Prostate gland (tissue), 2 donors: ENCODE measurements at regions of chr10 and their contacts with region 1.

Region 1: DNA sequence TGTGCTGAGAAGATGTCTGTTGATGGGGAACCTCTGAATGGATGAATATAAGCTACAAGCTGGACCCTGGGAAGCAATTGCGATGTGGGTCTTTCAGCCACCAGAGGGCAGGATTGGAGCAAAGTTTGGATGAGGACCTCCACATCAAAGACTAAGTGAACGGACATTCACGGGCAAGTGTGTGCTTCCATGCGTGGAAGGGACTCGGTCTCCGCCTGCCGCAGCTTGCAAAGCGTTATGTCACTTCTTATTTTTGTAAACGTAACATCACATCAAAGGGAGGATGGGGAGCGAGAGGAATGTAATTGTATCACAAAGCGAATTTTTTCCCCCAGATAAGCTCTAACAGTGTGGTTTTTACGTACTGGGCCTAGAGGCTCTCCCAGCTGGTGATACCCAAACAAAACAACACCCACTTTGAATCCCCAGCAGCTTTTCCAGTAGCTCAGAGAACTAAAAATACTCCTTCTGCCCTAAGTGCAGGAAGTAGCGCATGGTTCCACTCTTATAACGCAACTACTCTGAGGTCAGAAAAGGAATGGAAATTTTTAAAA is 65.0 kb downstream of the VWA2 start:
- DNase-seq: peak; percentile 88
- H3K4me3 ChIP-seq: peak overlapping the region; percentile 11 to 17
- H3K27ac ChIP-seq: peak overlapping the region; percentile 13 to 37
- H3K4me1 ChIP-seq: no peaks in the 10 kb centered on the region
- H3K27me3 ChIP-seq: no peaks in the 10 kb centered on the region
- CTCF ChIP-seq: peak; percentile 31 to 90 (median 88)
- POLR2A ChIP-seq: no peak

Region 2: GRCh38 chr10:114403541-114404161 is 99.6 kb after region 1 on chr10:
- intact Hi-C with region 1: loop called (anchors 5 kb)
- DNase-seq: no peak
- H3K4me3 ChIP-seq: peak overlapping the region; percentile 54 to 64
- H3K27ac ChIP-seq: peak overlapping the region; percentile 75
- H3K4me1 ChIP-seq: no peaks in the 10 kb centered on the region
- H3K27me3 ChIP-seq: no peaks in the 10 kb centered on the region
- CTCF ChIP-seq: peak in 2 of 4 experiments; percentile 34 to 45
- POLR2A ChIP-seq: peak; percentile 18

Region 3: GRCh38 chr10:114437456-114438292 is 133.6 kb after region 1 on chr10:
- intact Hi-C with region 1: loop called (anchors 5 kb)
- DNase-seq: no peak
- H3K4me3 ChIP-seq: no peak overlapping the region
- H3K27ac ChIP-seq: no peak overlapping the region
- H3K4me1 ChIP-seq: no peaks in the 10 kb centered on the region
- H3K27me3 ChIP-seq: no peaks in the 10 kb centered on the region
- CTCF ChIP-seq: peak in 3 of 4 experiments; percentile 44 to 68 (median 66)
- POLR2A ChIP-seq: no peak

Region 4: DNA sequence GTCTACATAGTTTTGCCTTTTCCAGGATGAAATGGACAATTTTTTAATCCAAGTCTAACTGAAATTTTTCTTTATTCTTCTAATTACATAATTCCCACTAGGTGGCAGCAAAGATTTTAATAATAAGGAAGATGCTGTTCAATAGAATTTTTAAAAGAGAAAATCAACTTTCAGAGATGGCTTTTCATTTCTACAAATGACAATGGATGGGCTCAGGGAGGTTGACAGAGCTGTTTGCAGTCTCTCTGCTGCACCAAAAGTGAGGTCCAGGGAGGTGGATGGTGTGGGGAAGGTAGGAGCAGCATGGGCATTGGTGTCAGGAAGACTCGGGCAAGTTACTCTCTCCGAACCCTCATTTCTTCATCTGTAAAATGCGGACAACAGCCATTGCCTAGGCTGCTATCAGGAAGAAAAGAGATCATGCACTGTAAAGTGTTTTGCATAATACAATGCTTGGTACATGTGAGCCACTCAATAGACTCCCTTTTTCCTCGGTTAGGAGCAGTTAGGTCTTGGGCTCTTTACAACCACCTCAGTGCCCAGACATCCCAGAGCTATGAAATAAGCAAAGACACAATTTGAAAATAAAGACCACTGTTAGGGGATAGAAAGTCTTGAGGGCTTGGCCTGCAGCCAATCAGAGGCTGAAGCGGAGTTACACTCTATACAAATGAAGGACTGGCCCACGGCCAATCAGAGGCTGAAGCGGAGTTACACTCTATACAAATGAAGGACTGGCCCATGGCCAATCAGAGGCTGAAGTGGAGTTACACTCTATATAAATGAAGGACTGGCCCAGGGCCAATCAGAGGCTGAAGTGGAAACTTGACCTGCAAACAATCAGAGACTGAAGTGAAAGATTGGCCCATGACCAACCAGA is 246.9 kb after region 1 on chr10:
- intact Hi-C with region 1: loop called (anchors 2 kb)
- DNase-seq: no peak
- H3K4me3 ChIP-seq: no peak overlapping the region
- H3K27ac ChIP-seq: no peak overlapping the region
- H3K4me1 ChIP-seq: no peaks in the 10 kb centered on the region
- H3K27me3 ChIP-seq: no peaks in the 10 kb centered on the region
- CTCF ChIP-seq: peak; percentile 19 to 69 (median 58)
- POLR2A ChIP-seq: no peak

Region 5: GRCh38 chr10:114795039-114795438 is 490.9 kb after region 1 on chr10:
- intact Hi-C with region 1: loop called (anchors 10 kb)
- DNase-seq: no peak
- H3K4me3 ChIP-seq: no peak overlapping the region
- H3K27ac ChIP-seq: no peak overlapping the region
- H3K4me1 ChIP-seq: no peaks in the 10 kb centered on the region
- H3K27me3 ChIP-seq: no peaks in the 10 kb centered on the region
- CTCF ChIP-seq: no peak
- POLR2A ChIP-seq: no peak